ENCODE measurements at regions of chr10 and their contacts with region 1.

Region 1: DNA sequence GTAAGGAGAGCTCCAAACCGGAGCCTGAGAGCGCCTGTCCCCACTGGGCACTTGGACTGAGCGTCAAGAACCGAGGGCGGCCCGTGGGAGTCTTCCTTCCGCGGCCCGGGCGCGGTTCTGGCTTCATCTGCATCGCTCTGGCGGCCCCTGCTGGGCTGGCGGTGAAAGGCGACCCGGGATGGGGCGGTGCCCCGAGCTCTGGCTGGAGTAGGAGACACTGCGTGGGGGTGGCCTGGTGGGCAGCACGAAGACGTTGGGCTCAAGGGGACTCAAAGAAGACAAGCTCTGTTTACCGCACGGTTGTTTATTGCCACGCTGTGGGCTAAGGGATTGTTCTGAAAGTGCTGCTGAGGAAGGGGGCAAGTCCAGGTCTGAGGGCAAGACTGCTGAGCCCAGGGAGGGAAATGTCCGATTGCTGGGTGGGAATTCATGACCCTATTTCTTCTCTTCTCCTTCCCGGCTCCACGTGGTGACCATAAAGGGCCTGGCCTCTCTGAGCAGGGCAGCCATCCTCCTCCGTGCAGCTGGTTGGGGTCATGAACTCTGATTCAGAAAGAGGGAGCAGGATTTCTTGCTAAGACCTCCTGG is 29.8 kb downstream of the PLAU start:
- DNase-seq: peak in 1 of 2 experiments; percentile 96
- H3K4me3 ChIP-seq: 0 out of 8 replicates have a peak overlapping the region, but pooled peaks of 1 of the 4 experiments have one; percentile 19
- H3K27ac ChIP-seq: no peak overlapping the region
- H3K4me1 ChIP-seq: peaks cover 0 to 4% (median 2%) of the 10 kb centered on the region in 4 experiments; a peak in 3 of 7 replicates
- H3K27me3 ChIP-seq: 0 out of 7 replicates have a peak, but pooled peaks cover 0 to 2% (median 0%) of the 10 kb centered on the region in 4 experiments
- CTCF ChIP-seq: peak; percentile 88 to 90 (median 90)
- EP300 ChIP-seq: no peak
- POLR2A ChIP-seq: no peak; a peak in 1 of 3 replicates
- RAD21 ChIP-seq: peak; percentile 93 to 96

Region 2: GRCh38 chr10:73848821-73849489 is 91.8 kb before region 1 on chr10:
- CTCF ChIA-PET with region 1: interaction called, 50 read pairs
- POLR2A ChIA-PET with region 1: no interaction called
- DNase-seq: peak; percentile 60 to 99
- H3K4me3 ChIP-seq: no peak overlapping the region
- H3K27ac ChIP-seq: no peak overlapping the region
- H3K4me1 ChIP-seq: peaks cover 0 to 7% (median 3%) of the 10 kb centered on the region in 4 experiments; a peak in 3 of 7 replicates
- H3K27me3 ChIP-seq: no peaks in the 10 kb centered on the region
- CTCF ChIP-seq: peak; percentile 94 to 100 (median 99)
- EP300 ChIP-seq: no peak
- POLR2A ChIP-seq: no peak
- RAD21 ChIP-seq: peak; percentile 95 to 98

Region 3: DNA sequence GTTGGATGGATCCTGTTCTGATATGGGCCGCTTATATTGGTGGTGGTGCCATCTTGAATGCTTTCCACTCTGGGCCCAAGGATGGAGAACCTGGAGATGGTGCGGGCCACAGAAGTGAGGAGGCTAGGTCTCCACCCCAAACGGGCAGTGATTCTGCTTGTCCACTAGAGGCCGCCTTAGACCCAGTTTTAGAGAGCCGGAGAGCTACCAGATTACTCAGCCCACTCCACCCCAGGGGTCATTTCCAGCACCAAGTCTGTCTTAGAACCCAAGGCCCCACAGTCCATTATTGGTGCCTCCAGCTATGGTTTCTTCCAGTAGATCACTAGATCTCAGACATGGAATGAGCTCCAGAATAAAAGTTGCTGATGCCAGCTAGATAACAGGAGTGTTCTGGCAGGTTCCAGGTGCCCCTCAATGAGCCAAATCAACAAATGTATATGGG is 54.6 kb before region 1 on chr10:
- CTCF ChIA-PET with region 1: interaction called, 681 read pairs
- POLR2A ChIA-PET with region 1: interaction called, 11 read pairs
- DNase-seq: peak in 1 of 2 experiments; percentile 81
- H3K4me3 ChIP-seq: no peak overlapping the region
- H3K27ac ChIP-seq: no peak overlapping the region
- H3K4me1 ChIP-seq: peaks cover 1 to 9% (median 5%) of the 10 kb centered on the region in 4 experiments; a peak in 5 of 7 replicates
- H3K27me3 ChIP-seq: no peaks in the 10 kb centered on the region
- CTCF ChIP-seq: peak; percentile 85 to 96 (median 95)
- EP300 ChIP-seq: no peak
- POLR2A ChIP-seq: no peak
- RAD21 ChIP-seq: peak; percentile 97 to 99

Region 4: DNA sequence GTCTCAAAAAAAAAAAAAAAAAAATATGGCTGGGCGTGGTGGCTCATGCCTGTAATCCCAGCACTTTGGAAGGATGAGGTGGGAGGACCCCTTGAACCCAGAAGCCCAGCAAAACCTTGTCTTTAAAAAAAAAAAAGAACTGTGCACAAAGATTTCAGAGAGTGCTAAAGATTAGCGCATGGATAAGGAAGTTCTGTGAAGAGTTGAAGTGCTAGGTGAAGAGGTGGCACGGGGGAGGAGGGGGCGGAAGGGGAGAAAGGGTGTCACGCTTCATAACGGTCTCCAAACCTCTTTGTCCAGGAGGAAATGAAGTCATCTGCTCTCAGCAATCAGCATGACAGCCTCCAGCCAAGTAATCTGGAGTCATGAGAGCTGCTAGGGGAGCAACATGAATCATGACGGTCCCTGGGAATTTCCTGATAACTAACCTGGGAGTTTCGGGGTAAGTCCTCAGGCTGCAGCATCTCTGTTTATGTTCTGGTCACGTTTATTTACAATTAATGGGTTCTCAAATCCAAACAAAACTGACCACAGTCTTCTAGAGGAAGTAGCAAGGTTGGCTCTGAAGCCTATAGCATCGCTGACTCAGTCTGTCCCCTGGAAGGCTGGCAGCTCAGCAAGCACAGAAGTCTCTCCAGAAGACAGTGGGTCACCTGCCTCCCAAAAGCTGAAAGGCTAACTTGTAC is 31.7 kb before region 1 on chr10:
- CTCF ChIA-PET with region 1: interaction called, 21 read pairs
- POLR2A ChIA-PET with region 1: no interaction called
- DNase-seq: no peak
- H3K4me3 ChIP-seq: no peak overlapping the region
- H3K27ac ChIP-seq: no peak overlapping the region
- H3K4me1 ChIP-seq: peaks cover 15 to 30% (median 24%) of the 10 kb centered on the region in 4 experiments
- H3K27me3 ChIP-seq: peaks cover 3 to 19% (median 12%) of the 10 kb centered on the region in 4 experiments; a peak in 6 of 7 replicates
- CTCF ChIP-seq: no peak
- EP300 ChIP-seq: no peak
- POLR2A ChIP-seq: no peak
- RAD21 ChIP-seq: no peak

Region 5: GRCh38 chr10:73920089-73920488 is 20.6 kb before region 1 on chr10:
- CTCF ChIA-PET with region 1: interaction called, 42 read pairs
- POLR2A ChIA-PET with region 1: interaction called, 4 read pairs
- DNase-seq: no peak
- H3K4me3 ChIP-seq: no peak overlapping the region
- H3K27ac ChIP-seq: peak overlapping the region; percentile 34; the same call in 1 of the 2 replicates
- H3K4me1 ChIP-seq: peaks cover 3 to 10% (median 4%) of the 10 kb centered on the region in 4 experiments
- H3K27me3 ChIP-seq: no peaks in the 10 kb centered on the region
- CTCF ChIP-seq: no peak
- EP300 ChIP-seq: no peak
- POLR2A ChIP-seq: no peak
- RAD21 ChIP-seq: no peak

Region 6: GRCh38 chr10:73926152-73926764 is 14.5 kb before region 1 on chr10:
- CTCF ChIA-PET with region 1: interaction called, 50 read pairs
- POLR2A ChIA-PET with region 1: interaction called, 4 read pairs
- DNase-seq: no peak
- H3K4me3 ChIP-seq: no peak overlapping the region
- H3K27ac ChIP-seq: no peak overlapping the region
- H3K4me1 ChIP-seq: peaks cover 3 to 7% (median 4%) of the 10 kb centered on the region in 4 experiments
- H3K27me3 ChIP-seq: no peaks in the 10 kb centered on the region
- CTCF ChIP-seq: no peak
- EP300 ChIP-seq: no peak
- POLR2A ChIP-seq: no peak
- RAD21 ChIP-seq: no peak

Region 7: GRCh38 chr10:73956476-73957359 is 16.0 kb after region 1 on chr10:
- CTCF ChIA-PET with region 1: interaction called, 41 read pairs
- POLR2A ChIA-PET with region 1: interaction called, 4 read pairs
- DNase-seq: no peak
- H3K4me3 ChIP-seq: no peak overlapping the region
- H3K27ac ChIP-seq: no peak overlapping the region
- H3K4me1 ChIP-seq: peaks cover 2 to 5% (median 5%) of the 10 kb centered on the region in 4 experiments
- H3K27me3 ChIP-seq: no peaks in the 10 kb centered on the region
- CTCF ChIP-seq: no peak
- EP300 ChIP-seq: no peak
- POLR2A ChIP-seq: no peak
- RAD21 ChIP-seq: no peak